GM12878 (cell line): ENCODE measurements at regions of chr13 and their contacts with region 1.

Region 1: DNA sequence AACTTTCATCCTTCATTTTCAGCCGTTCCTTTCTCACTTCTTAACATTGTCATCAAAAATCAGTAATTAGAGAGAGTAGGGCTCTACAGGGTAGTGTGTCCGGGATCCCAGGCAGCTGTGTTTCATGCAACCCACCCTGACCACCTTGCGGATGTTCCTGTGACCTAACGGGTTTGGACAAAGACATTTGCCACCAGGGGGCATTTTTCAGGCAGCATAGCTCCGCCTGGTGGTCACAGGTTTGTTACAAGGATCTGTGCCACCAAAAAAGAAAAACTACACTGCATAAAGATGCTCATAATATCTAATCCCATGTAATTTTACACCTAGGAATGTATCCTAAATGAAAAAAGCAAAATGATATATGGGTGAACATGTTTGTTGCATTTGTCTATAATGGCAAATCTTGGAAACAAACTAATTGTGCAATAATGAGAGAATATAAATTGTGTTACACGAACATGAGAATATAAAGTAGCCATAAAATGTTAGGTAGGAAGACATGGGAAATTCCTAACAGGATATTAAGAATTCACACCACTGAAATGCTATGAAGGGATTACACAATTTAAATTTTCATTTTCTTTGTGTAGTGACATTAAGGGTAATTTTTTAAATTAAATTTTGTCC is 123.0 kb downstream of the SLC7A1 start:
- DNase-seq: no peak
- ATAC-seq: peak; percentile 93
- H3K4me3 ChIP-seq: no peak overlapping the region
- H3K27ac ChIP-seq: no peak overlapping the region
- H3K4me1 ChIP-seq: no peaks in the 10 kb centered on the region
- H3K27me3 ChIP-seq: no peaks in the 10 kb centered on the region
- CTCF ChIP-seq: peak; percentile 98 to 99 (median 98)
- EP300 ChIP-seq: no peak
- POLR2A ChIP-seq: no peak
- RAD21 ChIP-seq: peak; percentile 63

Region 2: DNA sequence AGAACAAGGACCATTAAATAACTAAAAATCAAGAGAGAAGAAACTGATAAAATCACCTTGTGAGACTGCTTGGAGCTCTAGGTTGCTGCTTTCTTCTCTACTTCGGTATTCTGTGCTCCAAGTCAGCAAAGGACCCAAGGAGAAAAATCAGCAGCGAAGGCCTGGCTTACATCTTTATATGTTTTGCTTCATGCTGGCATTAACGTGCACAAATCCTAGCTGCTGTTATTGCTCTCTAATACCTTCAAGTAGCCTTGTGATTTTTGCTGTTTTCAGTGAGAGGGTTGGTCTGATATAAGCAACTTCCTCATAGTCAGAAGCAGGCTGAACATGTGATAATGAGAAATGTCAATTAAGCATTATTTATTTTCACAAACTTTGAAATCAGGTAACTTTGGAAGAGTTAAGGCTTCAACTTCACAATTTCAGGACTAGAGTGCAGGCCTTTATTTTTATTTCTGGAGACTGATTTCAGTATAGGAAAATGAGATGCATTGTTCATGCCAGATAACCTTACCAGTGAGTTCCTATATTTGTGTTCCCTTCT is 242.1 kb before region 1 on chr13:
- CTCF ChIA-PET with region 1: no interaction called
- POLR2A ChIA-PET with region 1: no interaction called
- RAD21 ChIA-PET with region 1: no interaction called
- SMC1A ChIA-PET with region 1: no interaction called
- in situ Hi-C with region 1: no loop called
- intact Hi-C with region 1: no loop called
- DNase-seq: no peak
- ATAC-seq: no peak
- H3K4me3 ChIP-seq: no peak overlapping the region
- H3K27ac ChIP-seq: no peak overlapping the region
- H3K4me1 ChIP-seq: no peaks in the 10 kb centered on the region
- H3K27me3 ChIP-seq: no peaks in the 10 kb centered on the region
- CTCF ChIP-seq: no peak
- EP300 ChIP-seq: no peak
- POLR2A ChIP-seq: no peak
- RAD21 ChIP-seq: no peak

Region 3: GRCh38 chr13:29454911-29455481 is 17.5 kb before region 1 on chr13:
- CTCF ChIA-PET with region 1: interaction called, 42 read pairs
- POLR2A ChIA-PET with region 1: no interaction called
- RAD21 ChIA-PET with region 1: interaction called, 8 read pairs
- SMC1A ChIA-PET with region 1: interaction called, 8 read pairs
- in situ Hi-C with region 1: no loop called
- intact Hi-C with region 1: no loop called
- DNase-seq: no peak
- ATAC-seq: peak; percentile 96
- H3K4me3 ChIP-seq: no peak overlapping the region
- H3K27ac ChIP-seq: no peak overlapping the region
- H3K4me1 ChIP-seq: peaks cover 3% of the 10 kb centered on the region; the same call in 1 of the 2 replicates
- H3K27me3 ChIP-seq: no peaks in the 10 kb centered on the region
- CTCF ChIP-seq: peak; percentile 46 to 66 (median 63)
- EP300 ChIP-seq: no peak
- POLR2A ChIP-seq: no peak
- RAD21 ChIP-seq: peak; percentile 17; the same call in 1 of the 2 replicates

Region 4: GRCh38 chr13:29496240-29496712 is 23.8 kb after region 1 on chr13:
- CTCF ChIA-PET with region 1: interaction called, 14 read pairs
- POLR2A ChIA-PET with region 1: no interaction called
- RAD21 ChIA-PET with region 1: no interaction called
- SMC1A ChIA-PET with region 1: no interaction called
- in situ Hi-C with region 1: no loop called
- intact Hi-C with region 1: no loop called
- DNase-seq: no peak
- ATAC-seq: peak; percentile 83
- H3K4me3 ChIP-seq: no peak overlapping the region
- H3K27ac ChIP-seq: no peak overlapping the region
- H3K4me1 ChIP-seq: peaks cover 7% of the 10 kb centered on the region
- H3K27me3 ChIP-seq: no peaks in the 10 kb centered on the region
- CTCF ChIP-seq: no peak
- EP300 ChIP-seq: no peak
- POLR2A ChIP-seq: no peak
- RAD21 ChIP-seq: no peak

Region 5: GRCh38 chr13:29707876-29708543 is 235.6 kb after region 1 on chr13:
- CTCF ChIA-PET with region 1: interaction called, 24 read pairs
- POLR2A ChIA-PET with region 1: no interaction called
- RAD21 ChIA-PET with region 1: interaction called, 4 read pairs
- SMC1A ChIA-PET with region 1: interaction called, 14 read pairs
- in situ Hi-C with region 1: no loop called
- intact Hi-C with region 1: loop called (anchors 10 kb)
- DNase-seq: no peak
- ATAC-seq: peak; percentile 98
- H3K4me3 ChIP-seq: no peak overlapping the region
- H3K27ac ChIP-seq: no peak overlapping the region
- H3K4me1 ChIP-seq: no peaks in the 10 kb centered on the region
- H3K27me3 ChIP-seq: peaks cover 2% of the 10 kb centered on the region in 2 experiments
- CTCF ChIP-seq: peak; percentile 76 to 84 (median 78)
- EP300 ChIP-seq: no peak
- POLR2A ChIP-seq: no peak
- RAD21 ChIP-seq: peak; percentile 87